Activated naive CD8-positive, alpha-beta T cell treated with anti-CD3 and anti-CD28 coated beads, Interleukin-2, amount 10 ng/mL, durations not matched to agents 7 days and 5 days (primary cell): ENCODE measurements at regions of chr19 and their contacts with region 1.

Region 1: GRCh38 chr19:39390755-39391592 is at the starts of genes MED29 and PAF1:
- DNase-seq: peak; percentile 89
- ATAC-seq: peak; percentile 96
- H3K4me3 Mint-ChIP-seq: peak within 1 kb of the TSS; percentile 96
- H3K27ac Mint-ChIP-seq: peak within 1 kb of the TSS; percentile 99
- H3K4me1 Mint-ChIP-seq: peaks cover 25% of the 10 kb centered on the region
- H3K27me3 Mint-ChIP-seq: no peaks in the 10 kb centered on the region
- total RNA-seq, gene MED29: 39.0 to 40.7 TPM
- total RNA-seq, gene PAF1: 40.7 to 47.0 TPM

Region 2: GRCh38 chr19:39341719-39342604 is 49.0 kb before region 1 on chr19 and contains the start of gene SAMD4B:
- POLR2A ChIA-PET with region 1: interaction called, 15 read pairs
- DNase-seq: peak; percentile 99
- ATAC-seq: peak; percentile 89
- H3K4me3 Mint-ChIP-seq: peak within 1 kb of the TSS; percentile 96
- H3K27ac Mint-ChIP-seq: peak within 1 kb of the TSS; percentile 96
- H3K4me1 Mint-ChIP-seq: peaks cover 51% of the 10 kb centered on the region
- H3K27me3 Mint-ChIP-seq: no peaks in the 10 kb centered on the region
- total RNA-seq, gene SAMD4B: 47.8 to 51.3 TPM

Region 3: GRCh38 chr19:39406656-39407393 is 15.9 kb after region 1 on chr19 and contains the start of gene ZFP36:
- POLR2A ChIA-PET with region 1: interaction called, 69 read pairs
- DNase-seq: peak; percentile 88
- ATAC-seq: peak; percentile 34
- H3K4me3 Mint-ChIP-seq: peak within 1 kb of the TSS; percentile 86
- H3K27ac Mint-ChIP-seq: peak within 1 kb of the TSS; percentile 99
- H3K4me1 Mint-ChIP-seq: peaks cover 45% of the 10 kb centered on the region
- H3K27me3 Mint-ChIP-seq: no peaks in the 10 kb centered on the region
- total RNA-seq, gene ZFP36: 102 to 107 TPM

Region 4: DNA sequence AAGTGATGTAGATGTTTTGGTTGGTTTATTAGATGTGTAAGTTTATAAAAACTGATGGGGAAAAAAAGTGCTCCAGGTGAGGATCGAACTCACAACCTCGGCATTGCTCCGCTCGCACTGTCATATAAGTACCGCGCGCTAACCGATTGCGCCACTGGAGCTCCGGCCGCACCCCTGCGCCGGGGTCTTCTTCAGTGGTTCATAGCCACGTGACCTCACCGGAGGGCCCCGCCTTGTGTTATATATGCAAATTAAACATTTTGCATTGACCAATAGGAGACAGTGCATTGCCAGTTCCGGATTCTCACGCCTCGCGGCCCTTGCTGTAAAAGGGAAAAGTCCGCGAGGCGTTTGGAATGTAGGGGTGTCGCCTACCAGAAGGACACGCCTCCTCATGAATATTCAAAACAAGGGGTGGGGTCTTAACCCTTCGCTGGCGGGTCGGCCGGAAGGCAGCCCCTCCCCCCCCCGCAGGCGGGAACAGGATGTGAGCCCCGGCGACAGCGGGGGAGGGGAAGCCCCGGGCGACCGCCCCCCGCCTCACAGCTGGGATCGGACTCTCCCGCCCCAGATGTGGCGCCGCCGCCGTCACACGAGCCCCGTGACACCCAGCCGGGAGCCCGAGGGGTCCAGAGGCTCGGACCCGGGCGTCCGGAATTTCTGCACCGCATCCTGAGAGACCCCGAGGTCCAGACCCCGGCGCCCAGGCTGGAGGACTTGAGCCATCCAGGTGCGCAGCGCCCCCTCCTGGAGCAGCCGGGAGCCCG is 21.3 kb after region 1 on chr19 and contains the start of gene PLEKHG2:
- POLR2A ChIA-PET with region 1: interaction called, 69 read pairs
- DNase-seq: peak; percentile 98
- ATAC-seq: peak; percentile 69
- H3K4me3 Mint-ChIP-seq: peak within 1 kb of the TSS; percentile 97
- H3K27ac Mint-ChIP-seq: peak within 1 kb of the TSS; percentile 98
- H3K4me1 Mint-ChIP-seq: peaks cover 37% of the 10 kb centered on the region
- H3K27me3 Mint-ChIP-seq: peaks cover 2% of the 10 kb centered on the region
- total RNA-seq, gene PLEKHG2: 65.7 to 65.9 TPM

Region 5: GRCh38 chr19:39445265-39446111 is 54.5 kb after region 1 on chr19 and contains the start of gene SUPT5H:
- POLR2A ChIA-PET with region 1: interaction called, 13 read pairs
- DNase-seq: peak; percentile 94
- ATAC-seq: peak; percentile 96
- H3K4me3 Mint-ChIP-seq: peak within 1 kb of the TSS; percentile 91
- H3K27ac Mint-ChIP-seq: peak within 1 kb of the TSS; percentile 96
- H3K4me1 Mint-ChIP-seq: peaks cover 42% of the 10 kb centered on the region
- H3K27me3 Mint-ChIP-seq: peaks cover 2% of the 10 kb centered on the region
- total RNA-seq, gene SUPT5H: 173 to 176 TPM